ENCODE measurements at regions of chr22 and their contacts with region 1.

Region 1: DNA sequence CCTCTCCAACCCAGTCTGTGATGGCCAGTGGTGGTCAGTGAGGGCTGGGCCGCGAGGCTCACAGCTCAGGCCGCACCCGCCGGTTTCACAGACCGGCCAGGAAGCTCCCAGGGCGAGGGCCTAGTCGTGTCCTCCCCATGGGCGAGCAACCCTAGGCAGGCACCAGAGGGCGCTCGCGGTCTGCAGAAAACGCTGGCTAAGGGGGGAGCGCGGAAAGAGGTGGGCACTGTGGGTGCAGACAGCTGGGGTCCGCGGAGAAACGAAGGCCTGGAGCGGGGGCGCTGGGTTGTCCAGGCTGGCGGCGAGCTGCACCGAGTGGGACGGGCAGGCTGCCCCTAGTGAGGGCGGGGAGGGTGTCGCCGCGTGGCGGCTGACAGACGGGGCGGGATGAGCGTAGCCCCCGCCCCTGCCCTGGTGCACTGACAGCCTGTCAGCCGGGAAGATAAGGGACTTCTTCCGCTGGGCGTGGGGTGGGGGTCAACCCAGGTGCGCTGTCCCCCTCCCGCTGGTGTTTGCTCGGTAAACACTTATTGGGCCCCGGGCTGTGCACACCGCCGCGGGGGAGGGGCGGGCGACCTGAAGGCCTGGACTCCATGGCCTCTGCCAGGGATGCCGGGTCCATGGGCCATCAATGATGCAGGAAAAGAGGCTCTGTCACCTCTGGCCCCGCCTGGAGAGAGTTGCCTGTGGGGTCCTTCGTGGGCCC is 7.5 kb downstream of the GP1BB start:
- DNase-seq: peak; percentile 89 to 94 (median 91)
- H3K4me3 ChIP-seq: no peak overlapping the region
- H3K27ac ChIP-seq: no peak overlapping the region
- H3K4me1 ChIP-seq: peaks cover 0 to 4% (median 0%) of the 10 kb centered on the region in 3 donors
- H3K27me3 ChIP-seq: no peaks in the 10 kb centered on the region
- CTCF ChIP-seq: peak; percentile 96

Region 2: DNA sequence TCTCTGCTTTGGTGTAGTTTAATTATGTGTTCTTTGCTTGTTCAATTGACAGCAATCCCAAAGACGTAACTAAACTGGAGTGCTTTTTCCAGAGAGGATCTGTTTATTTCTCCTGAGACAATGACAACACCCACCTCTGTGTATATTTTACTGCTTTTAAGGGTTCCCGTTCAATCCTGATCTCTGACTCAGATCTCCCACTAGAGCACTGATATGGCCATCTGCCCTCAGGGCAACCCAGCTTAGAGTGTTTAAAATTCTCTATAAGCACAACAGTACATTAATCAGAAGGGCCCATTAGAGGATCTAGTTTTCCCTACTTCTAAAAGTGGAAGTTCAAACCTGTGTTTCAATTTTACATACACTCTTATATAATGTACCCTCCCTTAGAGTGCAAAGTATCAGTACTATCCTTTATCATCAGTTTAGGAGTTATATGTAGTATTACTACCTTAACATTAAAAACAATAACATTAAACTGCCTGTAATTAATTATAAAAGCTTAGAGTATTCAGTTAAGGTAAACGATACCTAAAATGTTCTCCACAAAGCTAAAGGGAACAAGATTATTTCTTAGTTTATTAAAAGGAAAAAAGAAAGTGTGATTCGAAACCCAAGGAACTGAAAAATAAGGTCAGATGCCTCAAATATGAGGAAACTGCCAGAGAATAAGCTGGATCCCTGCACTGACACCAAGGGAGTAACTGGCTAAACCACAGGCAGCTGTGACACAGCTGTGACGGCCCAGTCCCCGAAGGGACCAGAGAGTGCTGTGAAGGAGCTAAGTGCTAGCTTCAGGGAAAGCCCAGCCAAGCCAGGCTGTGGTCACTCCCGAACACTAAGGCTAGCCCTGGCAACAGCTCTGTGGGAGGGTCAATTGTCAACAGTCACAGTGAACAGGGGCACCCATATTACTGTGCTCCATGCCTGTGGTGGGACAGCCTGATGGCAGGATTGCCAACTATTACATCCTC is 267.0 kb before region 1 on chr22:
- intact Hi-C with region 1: no loop called
- DNase-seq: peak in 1 of 5 donors; percentile 81
- H3K4me3 ChIP-seq: no peak overlapping the region
- H3K27ac ChIP-seq: no peak overlapping the region
- H3K4me1 ChIP-seq: no peaks in the 10 kb centered on the region
- H3K27me3 ChIP-seq: no peaks in the 10 kb centered on the region
- CTCF ChIP-seq: no peak

Region 3: GRCh38 chr22:19909350-19910179 is 178.8 kb after region 1 on chr22:
- intact Hi-C with region 1: loop called (anchors 5 kb)
- DNase-seq: peak; percentile 80 to 90 (median 87)
- H3K4me3 ChIP-seq: no peak overlapping the region
- H3K27ac ChIP-seq: no peak overlapping the region
- H3K4me1 ChIP-seq: no peaks in the 10 kb centered on the region
- H3K27me3 ChIP-seq: no peaks in the 10 kb centered on the region
- CTCF ChIP-seq: peak; percentile 88

Region 4: DNA sequence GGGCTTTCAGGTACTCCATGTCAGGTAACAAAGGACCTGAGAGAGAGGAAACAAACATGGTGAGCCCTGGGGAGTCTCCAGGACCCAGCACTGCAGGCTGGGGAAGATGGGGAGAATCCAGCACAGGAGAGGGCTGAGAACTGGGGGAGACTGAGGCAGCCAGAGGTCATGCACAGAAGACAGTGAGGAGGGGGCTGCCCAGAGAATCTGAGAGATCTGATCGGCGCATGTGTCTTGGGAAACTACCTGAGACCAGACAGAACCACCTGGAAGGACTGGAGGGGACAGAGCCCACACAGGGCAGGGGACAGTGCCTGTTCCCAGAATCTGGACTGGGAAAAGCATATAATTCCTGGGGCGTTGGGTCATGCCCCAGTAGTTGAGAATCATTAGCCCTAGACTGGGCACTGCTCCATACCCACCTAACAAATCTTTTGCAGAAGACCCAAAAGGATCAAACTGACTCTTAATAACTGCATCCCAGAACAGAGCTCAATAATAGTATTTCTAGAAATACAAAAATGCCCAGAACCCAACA is 190.8 kb after region 1 on chr22:
- intact Hi-C with region 1: no loop called
- DNase-seq: peak in 1 of 5 donors; percentile 10
- H3K4me3 ChIP-seq: no peak overlapping the region
- H3K27ac ChIP-seq: no peak overlapping the region
- H3K4me1 ChIP-seq: no peaks in the 10 kb centered on the region
- H3K27me3 ChIP-seq: no peaks in the 10 kb centered on the region
- CTCF ChIP-seq: no peak